ENCODE measurements at regions of chr18 and their contacts with region 1.

Region 1: DNA sequence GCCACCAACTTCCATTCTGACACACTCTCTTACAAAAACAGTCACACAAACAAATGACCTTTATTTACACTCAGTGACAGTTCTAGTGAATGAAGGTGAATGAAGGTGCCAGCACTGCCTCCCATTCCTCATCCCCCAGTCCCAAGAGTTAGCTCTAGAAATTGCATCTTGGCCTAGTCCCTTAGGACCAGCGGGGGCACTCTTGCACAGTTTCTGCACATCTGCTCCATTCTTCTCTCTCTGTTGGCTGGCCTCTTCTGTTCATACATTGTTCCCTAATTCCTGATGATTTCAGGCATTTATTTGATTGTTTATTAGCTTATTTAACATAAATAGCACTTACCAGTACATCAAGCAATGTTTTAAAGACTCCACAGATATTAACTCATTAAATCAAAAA is 30.9 kb downstream of the GAREM1 start:
- DNase-seq: no peak
- H3K4me3 ChIP-seq: no peak overlapping the region
- H3K27ac ChIP-seq: no peak overlapping the region
- H3K4me1 ChIP-seq: peaks cover 0 to 2% (median 0%) of the 10 kb centered on the region in 4 experiments; a peak in 1 of 7 replicates
- H3K27me3 ChIP-seq: peaks cover 0 to 1% (median 0%) of the 10 kb centered on the region in 4 experiments; a peak in 1 of 7 replicates
- CTCF ChIP-seq: peak; percentile 63 to 75 (median 64)
- EP300 ChIP-seq: no peak
- POLR2A ChIP-seq: no peak
- RAD21 ChIP-seq: peak; percentile 60 to 68

Region 2: GRCh38 chr18:32420084-32420750 is 19.6 kb before region 1 on chr18:
- CTCF ChIA-PET with region 1: interaction called, 20 read pairs
- POLR2A ChIA-PET with region 1: no interaction called
- DNase-seq: no peak
- H3K4me3 ChIP-seq: no peak overlapping the region
- H3K27ac ChIP-seq: no peak overlapping the region
- H3K4me1 ChIP-seq: no peaks in the 10 kb centered on the region
- H3K27me3 ChIP-seq: no peaks in the 10 kb centered on the region
- CTCF ChIP-seq: no peak
- EP300 ChIP-seq: no peak
- POLR2A ChIP-seq: no peak
- RAD21 ChIP-seq: no peak

Region 3: GRCh38 chr18:32450874-32451273 is 11.1 kb after region 1 on chr18:
- CTCF ChIA-PET with region 1: interaction called, 27 read pairs
- POLR2A ChIA-PET with region 1: no interaction called
- DNase-seq: no peak
- H3K4me3 ChIP-seq: no peak overlapping the region
- H3K27ac ChIP-seq: no peak overlapping the region
- H3K4me1 ChIP-seq: no peaks in the 10 kb centered on the region; a peak in 1 of 7 replicates
- H3K27me3 ChIP-seq: no peaks in the 10 kb centered on the region
- CTCF ChIP-seq: no peak
- EP300 ChIP-seq: no peak
- POLR2A ChIP-seq: no peak
- RAD21 ChIP-seq: no peak

Region 4: DNA sequence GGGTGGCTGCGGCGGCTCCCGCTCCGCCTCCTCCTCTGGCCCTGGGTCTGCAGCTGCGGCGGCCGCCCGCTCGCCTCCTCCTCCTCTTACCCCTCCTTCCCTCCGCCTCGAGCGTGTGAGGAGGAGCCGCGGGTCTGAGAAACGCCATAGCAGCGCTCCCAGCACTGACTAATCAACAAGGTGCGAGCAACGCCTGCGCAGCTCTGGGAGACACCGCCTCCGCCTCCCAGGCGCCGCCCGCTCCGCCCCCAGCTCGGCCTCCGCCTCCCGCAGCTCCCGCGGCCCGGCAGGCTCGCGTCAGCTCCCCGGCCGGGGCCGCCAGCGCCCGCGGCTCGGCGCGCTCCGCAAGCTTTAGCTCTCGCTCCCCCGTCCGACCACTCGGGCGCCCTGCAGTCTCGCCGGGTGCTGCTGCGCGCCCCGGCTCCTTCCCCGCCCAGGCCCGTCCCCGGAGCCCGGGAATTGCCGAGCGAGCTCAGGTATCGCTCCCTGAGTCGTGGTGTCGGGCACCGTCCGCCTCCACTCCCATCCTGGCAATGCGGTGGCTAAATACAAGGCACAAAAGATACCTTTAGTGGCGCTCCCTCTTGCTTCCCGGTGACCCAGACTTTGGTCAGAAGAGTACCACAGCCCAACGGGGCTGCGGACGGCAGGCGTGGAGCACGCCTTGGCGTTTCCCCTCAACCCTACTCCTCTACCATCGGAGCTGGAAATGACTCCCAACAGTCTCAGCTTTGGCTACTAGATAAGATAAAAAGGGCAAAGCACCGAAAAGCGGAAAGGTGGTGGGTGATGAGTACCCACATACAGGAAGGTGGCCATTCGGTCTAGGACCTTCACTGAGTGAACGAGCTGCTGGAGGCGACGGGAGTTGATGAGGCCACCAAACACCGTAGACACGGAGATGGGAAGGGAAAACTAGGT is 31.2 kb after region 1 on chr18 and contains the start of gene GAREM1:
- CTCF ChIA-PET with region 1: interaction called, 26 read pairs
- POLR2A ChIA-PET with region 1: interaction called, 8 read pairs
- DNase-seq: peak; percentile 83 to 91
- H3K4me3 ChIP-seq: peak within 1 kb of the TSS; percentile 87 to 98 (median 90)
- H3K27ac ChIP-seq: peak within 1 kb of the TSS; percentile 70; the same call in 1 of the 2 replicates
- H3K4me1 ChIP-seq: peaks cover 3 to 12% (median 6%) of the 10 kb centered on the region in 4 experiments
- H3K27me3 ChIP-seq: peaks cover 0 to 14% (median 9%) of the 10 kb centered on the region in 4 experiments; a peak in 4 of 7 replicates
- CTCF ChIP-seq: peak; percentile 50 to 60 (median 55)
- EP300 ChIP-seq: no peak
- POLR2A ChIP-seq: peak; percentile 72 to 88
- RAD21 ChIP-seq: peak; percentile 48 to 71
- total RNA-seq, gene GAREM1: 9.2 and 9.6 TPM in 2 replicates

Region 5: DNA sequence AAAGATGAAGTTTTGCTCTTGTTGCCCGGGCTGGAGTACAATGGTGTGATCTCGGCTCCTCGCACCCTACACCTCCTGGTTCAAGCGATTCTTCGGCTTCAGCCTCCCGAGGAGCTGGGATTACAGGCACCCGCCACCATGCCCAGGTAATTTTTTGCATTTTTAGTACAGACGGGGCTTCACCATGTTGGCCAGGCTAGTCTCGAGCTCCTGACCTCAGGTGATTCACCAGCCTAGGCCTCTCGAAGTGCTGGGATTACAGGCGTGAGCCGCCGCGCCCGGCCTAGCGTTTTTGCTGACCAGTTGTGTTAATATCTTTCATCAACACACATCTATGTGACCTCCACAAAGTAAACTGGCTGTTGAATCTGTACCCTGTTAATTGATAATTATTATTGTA is 382.4 kb after region 1 on chr18:
- CTCF ChIA-PET with region 1: no interaction called
- POLR2A ChIA-PET with region 1: no interaction called
- DNase-seq: no peak
- H3K4me3 ChIP-seq: no peak overlapping the region
- H3K27ac ChIP-seq: no peak overlapping the region
- H3K4me1 ChIP-seq: no peaks in the 10 kb centered on the region
- H3K27me3 ChIP-seq: no peaks in the 10 kb centered on the region
- CTCF ChIP-seq: no peak
- EP300 ChIP-seq: no peak
- POLR2A ChIP-seq: no peak
- RAD21 ChIP-seq: no peak